Right ventricle myocardium inferior (tissue), 1 donor: ENCODE measurements at regions of chr9 and their contacts with region 1.

Region 1: GRCh38 chr9:14768405-14769229 is 46.1 kb upstream of the CER1 start:
- DNase-seq: no peak
- ATAC-seq: no peak

Region 2: GRCh38 chr9:13033959-13034693 is 1734.5 kb before region 1 on chr9:
- intact Hi-C with region 1: loop called (anchors 5 kb)
- DNase-seq: peak; percentile 73
- ATAC-seq: peak; percentile 81

Region 3: DNA sequence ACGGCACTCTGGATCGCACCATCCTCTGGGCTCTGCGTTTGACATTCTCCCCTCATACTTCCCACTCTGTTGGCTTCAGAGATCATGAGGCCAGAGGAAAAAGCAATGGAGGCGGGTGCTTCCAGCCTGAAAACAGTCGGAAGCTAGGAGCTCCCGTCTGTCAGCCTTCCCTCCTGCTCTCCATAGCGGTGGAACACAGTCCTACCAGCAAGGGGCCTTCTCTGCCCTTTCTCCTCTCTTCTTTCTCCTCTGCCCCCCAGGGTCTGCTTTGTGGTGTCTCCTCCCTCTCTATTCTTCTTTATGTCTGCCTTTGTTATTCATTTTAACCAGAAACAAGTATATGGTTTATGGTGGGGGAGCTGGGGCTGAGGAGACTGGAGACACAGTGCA is 302.2 kb before region 1 on chr9:
- intact Hi-C with region 1: loop called (anchors 5 kb)
- DNase-seq: no peak
- ATAC-seq: no peak

Region 4: DNA sequence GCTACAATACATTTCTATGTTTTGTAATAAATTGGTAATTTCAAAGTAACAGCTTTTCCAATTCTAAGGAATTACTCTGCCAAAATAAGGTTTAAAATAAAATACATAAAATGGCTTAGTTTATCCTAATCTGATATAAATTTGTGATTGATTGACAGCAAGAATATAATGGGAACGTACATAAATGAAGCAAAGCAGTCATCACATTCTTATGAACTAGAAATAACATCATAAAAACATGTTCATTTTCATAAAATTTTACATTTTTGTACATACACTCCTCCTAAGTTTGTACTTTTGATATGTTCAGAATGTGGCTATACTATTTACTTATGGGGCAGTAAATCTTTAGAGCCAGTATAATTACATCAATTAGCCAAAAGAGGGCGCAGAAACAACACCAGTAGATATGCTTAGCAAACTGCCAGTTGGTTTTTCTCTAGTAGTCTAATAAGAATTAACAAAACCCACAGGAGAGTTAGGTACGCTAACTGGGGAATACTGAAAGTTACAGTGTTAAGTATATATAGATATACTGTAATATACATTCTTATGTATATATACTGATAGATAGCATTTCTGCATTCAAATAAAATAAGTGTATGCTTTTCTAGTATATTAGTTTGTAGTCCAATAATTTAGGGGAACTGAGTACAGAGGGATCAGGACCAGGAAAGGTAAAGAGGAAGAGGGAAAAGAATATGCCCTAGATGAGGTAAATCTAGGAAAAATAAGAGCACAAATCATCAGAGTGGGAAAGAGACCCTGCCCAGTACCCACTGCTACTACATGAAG is 152.2 kb before region 1 on chr9:
- intact Hi-C with region 1: loop called (anchors 5 kb)
- DNase-seq: no peak
- ATAC-seq: no peak